K562 (cell line): ENCODE measurements at regions of chr9 and their contacts with region 1.

Region 1: DNA sequence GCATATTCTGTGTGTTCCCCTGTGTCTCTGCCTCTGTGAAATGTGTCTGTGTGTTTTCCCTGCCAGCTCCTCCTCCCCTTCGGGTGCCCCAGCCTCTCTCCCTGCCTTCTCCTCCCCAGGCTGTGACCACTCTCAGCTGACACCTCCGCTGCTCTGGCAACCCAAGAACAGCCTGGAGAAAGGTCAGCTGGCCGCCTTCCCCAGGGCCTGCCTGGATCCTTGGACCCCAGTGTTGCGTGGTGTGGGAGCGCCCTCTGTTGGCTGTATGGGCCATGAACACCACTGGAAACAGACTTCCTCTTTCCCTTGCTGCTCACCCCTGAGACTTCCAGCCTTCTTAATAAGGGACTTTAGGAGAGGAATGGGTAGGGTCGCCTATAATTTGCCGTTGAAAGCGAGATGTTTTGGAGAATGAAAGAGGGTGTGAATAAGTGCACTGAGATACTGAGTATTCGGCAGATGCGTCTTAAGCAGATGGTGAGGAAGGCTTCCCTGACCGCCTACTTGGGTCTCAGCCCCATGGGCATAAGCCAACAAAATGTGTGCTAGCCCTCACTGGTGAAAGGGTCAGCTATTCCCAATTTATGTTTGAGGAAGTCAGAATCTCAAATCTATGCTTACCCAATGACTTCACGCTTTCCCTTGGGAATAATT is 114.9 kb upstream of the TRIM32 start:
- DNase-seq: peak; percentile 83 to 93 (median 90)
- ATAC-seq: peak; percentile 99
- H3K4me3 ChIP-seq: no peak overlapping the region
- H3K27ac ChIP-seq: no peak overlapping the region
- H3K4me1 ChIP-seq: peaks cover 6 to 10% of the 10 kb centered on the region in 2 experiments; a peak in 2 of 5 replicates
- H3K27me3 ChIP-seq: no peaks in the 10 kb centered on the region
- CTCF ChIP-seq: peak; percentile 89 to 95 (median 94)
- EP300 ChIP-seq: 0 out of 2 replicates have a peak, but pooled peaks have one; percentile 10
- POLR2A ChIP-seq: no peak
- RAD21 ChIP-seq: peak; percentile 97

Region 2: DNA sequence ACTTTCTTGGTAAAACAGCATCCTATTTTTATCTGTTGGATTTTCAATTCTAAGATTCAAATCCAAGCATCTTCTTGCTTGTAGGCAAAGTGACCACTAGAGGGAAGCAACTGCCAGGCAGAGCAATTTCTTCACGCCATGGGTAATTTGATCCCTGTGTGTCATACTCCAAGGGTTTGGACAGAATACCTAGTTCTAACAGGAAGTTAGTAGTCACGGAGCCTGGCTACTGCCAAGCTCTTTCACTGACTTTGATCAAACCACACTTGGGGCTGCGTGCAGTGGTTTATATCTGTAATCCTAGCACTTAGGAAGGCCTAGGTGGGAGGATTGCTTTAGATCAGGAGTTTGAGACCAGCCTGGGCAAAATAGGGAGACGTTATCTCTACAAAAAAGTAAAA is 980.6 kb before region 1 on chr9:
- CTCF ChIA-PET with region 1: interaction called, 4 read pairs
- POLR2A ChIA-PET with region 1: no interaction called
- in situ Hi-C with region 1: loop called (anchors 5 kb)
- intact Hi-C with region 1: loop called (anchors 2 kb)
- DNase-seq: peak; percentile 9 to 52 (median 14)
- ATAC-seq: peak; percentile 83
- H3K4me3 ChIP-seq: no peak overlapping the region
- H3K27ac ChIP-seq: no peak overlapping the region; the same call in 2 of the 3 replicates
- H3K4me1 ChIP-seq: no peaks in the 10 kb centered on the region
- H3K27me3 ChIP-seq: no peaks in the 10 kb centered on the region
- CTCF ChIP-seq: peak; percentile 37 to 68 (median 53)
- EP300 ChIP-seq: no peak
- POLR2A ChIP-seq: no peak
- RAD21 ChIP-seq: peak; percentile 71 to 77

Region 3: DNA sequence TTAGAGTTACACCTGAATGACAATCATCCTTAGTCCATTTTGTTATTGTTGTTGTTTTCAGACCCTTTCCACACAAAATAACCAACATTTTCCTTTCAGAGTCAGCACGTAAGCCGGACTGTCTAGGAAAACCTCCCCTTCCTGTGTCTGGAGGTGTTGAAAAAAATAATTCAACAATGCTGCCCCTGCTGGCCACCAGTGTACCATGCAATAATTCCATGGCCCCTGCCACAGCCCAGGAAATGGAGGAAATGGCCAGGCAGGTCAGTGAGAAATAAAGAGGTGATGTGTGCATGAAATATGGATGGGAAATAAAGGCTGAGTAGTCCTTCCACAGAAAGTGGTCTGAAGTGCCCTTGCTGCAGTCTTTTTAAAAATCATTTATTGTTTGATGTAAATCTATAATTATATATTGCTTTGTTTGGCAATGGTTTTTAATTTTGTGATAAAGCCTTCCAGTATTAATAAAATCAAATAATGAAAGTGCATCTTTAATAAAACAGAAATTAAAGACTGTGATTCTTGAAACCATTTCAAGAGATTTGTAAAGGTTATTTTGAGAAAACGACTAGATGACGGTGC is 571.4 kb before region 1 on chr9:
- CTCF ChIA-PET with region 1: no interaction called
- POLR2A ChIA-PET with region 1: no interaction called
- in situ Hi-C with region 1: no loop called
- intact Hi-C with region 1: no loop called
- DNase-seq: peak; percentile 8 to 39 (median 22)
- ATAC-seq: peak; percentile 52; the same call in 1 of the 3 replicates
- H3K4me3 ChIP-seq: no peak overlapping the region
- H3K27ac ChIP-seq: no peak overlapping the region
- H3K4me1 ChIP-seq: no peaks in the 10 kb centered on the region
- H3K27me3 ChIP-seq: no peaks in the 10 kb centered on the region
- CTCF ChIP-seq: peak; percentile 22 to 56 (median 39); a peak in 4 of 6 replicates
- EP300 ChIP-seq: no peak
- POLR2A ChIP-seq: no peak
- RAD21 ChIP-seq: no peak

Region 4: GRCh38 chr9:116149844-116150243 is 422.4 kb before region 1 on chr9:
- CTCF ChIA-PET with region 1: interaction called, 10 read pairs
- POLR2A ChIA-PET with region 1: no interaction called
- in situ Hi-C with region 1: loop called (anchors 5 kb)
- intact Hi-C with region 1: loop called (anchors 2 kb)
- DNase-seq: peak; percentile 32 to 51 (median 40)
- ATAC-seq: peak; percentile 88
- H3K4me3 ChIP-seq: no peak overlapping the region
- H3K27ac ChIP-seq: no peak overlapping the region
- H3K4me1 ChIP-seq: peaks cover 0 to 6% of the 10 kb centered on the region in 2 experiments; a peak in 1 of 5 replicates
- H3K27me3 ChIP-seq: peaks cover 3 to 5% of the 10 kb centered on the region in 2 experiments; a peak in 3 of 5 replicates
- CTCF ChIP-seq: peak; percentile 70 to 81 (median 71)
- EP300 ChIP-seq: no peak
- POLR2A ChIP-seq: no peak
- RAD21 ChIP-seq: peak; percentile 60 to 64

Region 5: GRCh38 chr9:116219686-116220085 is 352.5 kb before region 1 on chr9:
- CTCF ChIA-PET with region 1: no interaction called
- POLR2A ChIA-PET with region 1: no interaction called
- in situ Hi-C with region 1: no loop called
- intact Hi-C with region 1: loop called (anchors 10 kb)
- DNase-seq: peak in 2 of 4 experiments; percentile 23 to 44
- ATAC-seq: peak; percentile 89
- H3K4me3 ChIP-seq: no peak overlapping the region
- H3K27ac ChIP-seq: no peak overlapping the region
- H3K4me1 ChIP-seq: peaks cover 0 to 10% of the 10 kb centered on the region in 2 experiments; a peak in 1 of 5 replicates
- H3K27me3 ChIP-seq: no peaks in the 10 kb centered on the region
- CTCF ChIP-seq: peak in 2 of 3 experiments; percentile 10 to 52; a peak in 2 of 6 replicates
- EP300 ChIP-seq: no peak
- POLR2A ChIP-seq: no peak
- RAD21 ChIP-seq: peak; percentile 53 to 66

Region 6: GRCh38 chr9:116269278-116269677 is 302.9 kb before region 1 on chr9:
- CTCF ChIA-PET with region 1: no interaction called
- POLR2A ChIA-PET with region 1: no interaction called
- in situ Hi-C with region 1: no loop called
- intact Hi-C with region 1: loop called (anchors 2 kb)
- DNase-seq: no peak
- ATAC-seq: no peak
- H3K4me3 ChIP-seq: no peak overlapping the region
- H3K27ac ChIP-seq: no peak overlapping the region
- H3K4me1 ChIP-seq: no peaks in the 10 kb centered on the region
- H3K27me3 ChIP-seq: no peaks in the 10 kb centered on the region
- CTCF ChIP-seq: no peak
- EP300 ChIP-seq: no peak
- POLR2A ChIP-seq: no peak
- RAD21 ChIP-seq: no peak

Region 7: DNA sequence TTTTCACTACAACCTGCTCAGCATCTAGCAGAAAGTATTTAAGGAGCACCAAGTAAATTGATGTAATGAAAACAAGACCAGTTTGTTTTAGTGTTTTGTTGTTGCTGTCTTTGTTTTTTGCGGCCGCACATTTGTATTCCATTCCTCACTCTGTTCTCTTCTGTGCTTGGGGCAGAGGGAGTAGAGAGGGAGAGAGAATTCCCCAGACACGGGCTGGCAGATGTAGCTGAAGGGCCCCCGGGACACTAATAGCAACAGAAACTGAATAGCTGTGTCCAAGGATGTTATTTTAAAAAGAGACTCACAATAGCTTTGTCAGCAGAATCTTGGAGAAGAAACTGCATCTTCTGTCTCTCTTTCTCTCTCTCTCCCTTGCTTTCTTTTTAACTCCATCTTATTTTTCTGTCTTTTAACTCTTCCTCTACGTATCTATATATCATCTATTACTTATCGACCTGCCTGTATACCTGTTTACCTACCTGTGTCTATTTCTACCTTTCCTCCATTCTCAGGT is 273.3 kb before region 1 on chr9:
- CTCF ChIA-PET with region 1: no interaction called
- POLR2A ChIA-PET with region 1: no interaction called
- in situ Hi-C with region 1: no loop called
- intact Hi-C with region 1: loop called (anchors 10 kb)
- DNase-seq: no peak
- ATAC-seq: no peak
- H3K4me3 ChIP-seq: no peak overlapping the region
- H3K27ac ChIP-seq: no peak overlapping the region
- H3K4me1 ChIP-seq: no peaks in the 10 kb centered on the region
- H3K27me3 ChIP-seq: no peaks in the 10 kb centered on the region
- CTCF ChIP-seq: no peak
- EP300 ChIP-seq: no peak
- POLR2A ChIP-seq: no peak
- RAD21 ChIP-seq: no peak

Region 8: GRCh38 chr9:116661037-116661954 is 89.1 kb after region 1 on chr9:
- CTCF ChIA-PET with region 1: no interaction called
- POLR2A ChIA-PET with region 1: no interaction called
- in situ Hi-C with region 1: no loop called
- intact Hi-C with region 1: loop called (anchors 5 kb)
- DNase-seq: peak; percentile 47 to 62 (median 54)
- ATAC-seq: peak; percentile 91
- H3K4me3 ChIP-seq: no peak overlapping the region
- H3K27ac ChIP-seq: no peak overlapping the region
- H3K4me1 ChIP-seq: no peaks in the 10 kb centered on the region
- H3K27me3 ChIP-seq: no peaks in the 10 kb centered on the region
- CTCF ChIP-seq: peak; percentile 63 to 83 (median 70)
- EP300 ChIP-seq: no peak
- POLR2A ChIP-seq: no peak
- RAD21 ChIP-seq: peak; percentile 79 to 80

Region 9: DNA sequence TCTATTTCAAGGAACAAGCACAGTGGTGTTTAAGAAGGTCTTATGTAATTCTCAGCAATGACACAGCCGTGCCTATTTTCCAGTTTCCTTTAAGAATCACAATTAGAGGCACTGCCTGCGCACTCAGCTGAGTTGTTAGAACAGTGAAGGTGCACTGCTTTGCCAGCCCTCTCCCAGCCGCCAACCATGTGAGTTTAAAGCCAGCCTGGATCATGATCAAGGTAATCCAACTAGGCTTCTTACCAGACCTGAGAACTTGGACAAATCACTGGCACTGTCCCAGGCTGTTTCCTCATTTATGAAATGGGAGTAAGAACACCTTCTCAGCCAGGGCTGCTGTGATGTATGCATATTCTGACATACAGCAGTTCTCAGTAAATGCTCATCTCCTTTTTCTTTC is 743.0 kb after region 1 on chr9:
- CTCF ChIA-PET with region 1: no interaction called
- POLR2A ChIA-PET with region 1: no interaction called
- in situ Hi-C with region 1: no loop called
- intact Hi-C with region 1: no loop called
- DNase-seq: no peak
- ATAC-seq: no peak
- H3K4me3 ChIP-seq: no peak overlapping the region
- H3K27ac ChIP-seq: no peak overlapping the region
- H3K4me1 ChIP-seq: no peaks in the 10 kb centered on the region
- H3K27me3 ChIP-seq: no peaks in the 10 kb centered on the region
- CTCF ChIP-seq: no peak
- EP300 ChIP-seq: no peak
- POLR2A ChIP-seq: no peak
- RAD21 ChIP-seq: no peak